PC-9 (cell line): ENCODE measurements at regions of chr13 and their contacts with region 1.

Region 1: GRCh38 chr13:101144808-101145419 is 271.4 kb downstream of the NALCN start:
- DNase-seq: peak; percentile 7 to 57
- H3K4me3 ChIP-seq: no peak overlapping the region
- H3K27ac ChIP-seq: no peak overlapping the region
- H3K4me1 ChIP-seq: peaks cover 15% of the 10 kb centered on the region
- H3K27me3 ChIP-seq: no peaks in the 10 kb centered on the region
- CTCF ChIP-seq: peak; percentile 87

Region 2: GRCh38 chr13:101218484-101218883 is 73.6 kb after region 1 on chr13:
- CTCF ChIA-PET with region 1: no interaction called
- POLR2A ChIA-PET with region 1: no interaction called
- intact Hi-C with region 1: no loop called
- DNase-seq: no peak
- H3K4me3 ChIP-seq: no peak overlapping the region
- H3K27ac ChIP-seq: no peak overlapping the region
- H3K4me1 ChIP-seq: 0 out of 2 replicates have a peak, but pooled peaks cover 6% of the 10 kb centered on the region
- H3K27me3 ChIP-seq: no peaks in the 10 kb centered on the region
- CTCF ChIP-seq: no peak

Region 3: GRCh38 chr13:101258071-101258470 is 113.2 kb after region 1 on chr13:
- CTCF ChIA-PET with region 1: no interaction called
- POLR2A ChIA-PET with region 1: no interaction called
- intact Hi-C with region 1: loop called (anchors 2 kb)
- DNase-seq: peak; percentile 79 to 98
- H3K4me3 ChIP-seq: peak overlapping the region; percentile 60
- H3K27ac ChIP-seq: peak overlapping the region; percentile 95
- H3K4me1 ChIP-seq: peaks cover 18% of the 10 kb centered on the region
- H3K27me3 ChIP-seq: no peaks in the 10 kb centered on the region
- CTCF ChIP-seq: peak; percentile 49; the same call in 1 of the 2 replicates

Region 4: GRCh38 chr13:101307181-101307701 is 162.3 kb after region 1 on chr13:
- CTCF ChIA-PET with region 1: no interaction called
- POLR2A ChIA-PET with region 1: no interaction called
- intact Hi-C with region 1: loop called (anchors 5 kb)
- DNase-seq: no peak
- H3K4me3 ChIP-seq: no peak overlapping the region
- H3K27ac ChIP-seq: no peak overlapping the region
- H3K4me1 ChIP-seq: peaks cover 12% of the 10 kb centered on the region; the same call in 1 of the 2 replicates
- H3K27me3 ChIP-seq: no peaks in the 10 kb centered on the region
- CTCF ChIP-seq: no peak

Region 5: GRCh38 chr13:101757446-101758039 is 612.6 kb after region 1 on chr13:
- CTCF ChIA-PET with region 1: interaction called, 11 read pairs
- POLR2A ChIA-PET with region 1: no interaction called
- intact Hi-C with region 1: loop called (anchors 1 kb)
- DNase-seq: peak in 1 of 2 experiments; percentile 58
- H3K4me3 ChIP-seq: no peak overlapping the region
- H3K27ac ChIP-seq: no peak overlapping the region
- H3K4me1 ChIP-seq: no peaks in the 10 kb centered on the region
- H3K27me3 ChIP-seq: no peaks in the 10 kb centered on the region
- CTCF ChIP-seq: peak; percentile 89

Region 6: GRCh38 chr13:102555917-102556553 is 1411.1 kb after region 1 on chr13:
- CTCF ChIA-PET with region 1: interaction called, 4 read pairs
- POLR2A ChIA-PET with region 1: no interaction called
- intact Hi-C with region 1: loop called (anchors 5 kb)
- DNase-seq: peak in 1 of 2 experiments; percentile 6
- H3K4me3 ChIP-seq: no peak overlapping the region
- H3K27ac ChIP-seq: no peak overlapping the region
- H3K4me1 ChIP-seq: no peaks in the 10 kb centered on the region
- H3K27me3 ChIP-seq: peaks cover 4% of the 10 kb centered on the region; the same call in 1 of the 2 replicates
- CTCF ChIP-seq: peak; percentile 73